Activated T-helper 2 cell treated with anti-CD3 and anti-CD28 coated beads, Interferon-gamma antibody, Interleukin-2, Interleukin-4, amounts not matched to agents 10 μg/mL and 5 μg/mL and 100 μg/mL, durations not matched to agents 14 hours and 24 hours and 36 hours (primary cell): ENCODE measurements at regions of chr9 and their contacts with region 1.

Region 1: DNA sequence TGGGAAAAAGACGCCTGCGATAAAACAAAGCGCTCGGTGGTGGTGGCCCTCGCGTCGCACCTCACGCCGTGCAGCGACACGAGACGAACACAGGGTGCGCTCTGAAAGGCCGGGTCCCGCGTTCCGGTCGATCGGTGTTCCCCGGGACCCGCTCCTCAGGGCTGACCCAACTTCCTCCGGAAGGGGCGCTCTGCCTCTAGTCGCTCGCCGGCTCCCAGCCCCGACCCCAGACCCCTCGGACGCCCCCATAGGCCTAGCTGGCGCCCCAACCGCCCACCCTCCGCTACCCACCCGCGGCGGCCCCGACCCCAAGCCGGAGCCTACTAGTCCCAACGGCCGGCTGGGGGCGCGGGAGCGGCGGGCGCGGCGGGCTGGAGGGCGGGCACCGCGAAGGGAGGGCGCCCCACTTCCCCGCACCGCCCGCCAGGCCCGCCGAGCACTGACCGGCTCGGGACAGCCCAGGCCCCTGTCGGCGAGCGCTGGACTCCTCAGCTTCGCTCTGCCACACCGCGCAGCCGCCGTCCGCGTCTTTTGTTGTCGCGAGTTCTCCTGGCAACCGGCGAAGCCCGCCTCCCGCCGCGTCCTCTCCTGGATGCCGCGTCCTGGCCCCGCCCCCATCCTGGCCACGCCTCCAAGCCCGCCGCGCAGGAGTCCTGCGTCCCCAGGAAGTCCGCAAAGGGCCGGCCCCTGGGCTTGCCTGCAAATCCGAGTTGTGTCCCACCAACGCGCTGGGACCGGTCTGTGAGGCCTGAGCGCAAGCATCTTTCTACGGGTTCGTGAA is at the start of gene KIF27:
- DNase-seq: peak; percentile 97
- H3K4me3 Mint-ChIP-seq: peak within 1 kb of the TSS; percentile 78
- H3K27ac Mint-ChIP-seq: peak within 1 kb of the TSS; percentile 90
- H3K4me1 Mint-ChIP-seq: peaks cover 19% of the 10 kb centered on the region
- H3K27me3 Mint-ChIP-seq: no peaks in the 10 kb centered on the region
- total RNA-seq, gene KIF27: 2.3 and 2.7 TPM in 2 replicates

Region 2: DNA sequence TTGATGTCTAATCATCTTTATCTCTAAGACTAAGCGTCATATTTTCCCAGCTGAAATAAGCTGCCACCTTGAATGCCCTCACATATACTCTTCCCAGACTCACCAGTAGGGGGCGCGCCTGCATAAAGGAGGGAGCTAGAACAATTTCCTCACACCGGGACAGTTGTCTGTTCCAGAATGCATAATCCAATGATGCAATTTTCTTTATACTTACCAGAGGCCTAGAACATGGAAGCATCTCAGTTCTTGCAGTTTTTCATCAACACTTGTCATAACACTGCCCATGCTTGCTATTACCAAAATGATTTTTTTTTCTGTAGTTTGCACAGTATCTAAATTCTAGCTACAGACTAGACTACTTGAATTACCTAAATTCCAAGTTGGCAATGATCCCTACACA is 586.8 kb before region 1 on chr9:
- intact Hi-C with region 1: loop called (anchors 10 kb)
- DNase-seq: peak; percentile 55
- H3K4me3 Mint-ChIP-seq: no peak overlapping the region
- H3K27ac Mint-ChIP-seq: no peak overlapping the region
- H3K4me1 Mint-ChIP-seq: peaks cover 11% of the 10 kb centered on the region
- H3K27me3 Mint-ChIP-seq: no peaks in the 10 kb centered on the region

Region 3: GRCh38 chr9:83707768-83708514 is 213.2 kb before region 1 on chr9 and contains the start of gene UBQLN1:
- intact Hi-C with region 1: loop called (anchors 1 kb)
- DNase-seq: peak; percentile 90
- H3K4me3 Mint-ChIP-seq: peak within 1 kb of the TSS; percentile 88
- H3K27ac Mint-ChIP-seq: peak within 1 kb of the TSS; percentile 96
- H3K4me1 Mint-ChIP-seq: peaks cover 27% of the 10 kb centered on the region
- H3K27me3 Mint-ChIP-seq: no peaks in the 10 kb centered on the region
- total RNA-seq, gene UBQLN1: 138 and 140 TPM in 2 replicates

Region 4: DNA sequence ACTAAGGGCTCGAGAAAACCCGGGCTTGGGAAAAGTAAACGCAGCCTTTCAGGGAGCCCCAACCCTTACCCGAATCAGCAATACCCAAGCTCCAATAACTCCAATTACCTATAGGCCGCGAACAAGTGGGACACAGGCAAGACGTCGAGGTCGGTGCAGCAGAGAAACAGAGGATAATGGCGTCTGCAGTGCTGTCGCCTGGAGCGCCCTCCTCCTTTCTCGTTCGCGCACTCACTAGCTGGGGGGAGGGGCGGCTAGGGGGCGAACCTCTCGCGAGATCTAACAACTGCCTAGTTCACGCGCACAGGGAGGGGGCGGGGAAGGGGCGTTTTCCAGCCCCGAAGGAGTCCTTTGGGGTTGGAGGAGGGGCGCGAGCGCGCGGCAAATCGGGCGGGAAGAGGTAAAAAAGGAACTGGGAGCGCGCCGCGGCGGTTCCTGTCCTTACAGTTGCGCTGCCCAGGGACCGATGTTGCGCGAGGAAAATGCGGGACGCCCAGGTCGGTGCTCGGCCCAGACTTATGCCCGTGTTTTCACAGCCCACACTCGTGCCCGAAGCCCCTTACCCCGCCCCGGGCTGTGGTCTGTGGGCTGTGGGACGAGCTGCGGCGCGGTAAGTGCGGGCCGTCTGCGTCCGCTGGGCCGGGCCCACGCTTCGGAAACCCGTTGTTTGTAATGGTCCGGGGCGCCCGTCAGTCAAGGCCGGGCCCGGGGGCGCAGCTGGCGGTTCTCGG is 59.4 kb after region 1 on chr9 and contains the start of gene RMI1:
- intact Hi-C with region 1: loop called (anchors 1 kb)
- DNase-seq: peak; percentile 96
- H3K4me3 Mint-ChIP-seq: peak within 1 kb of the TSS; percentile 100
- H3K27ac Mint-ChIP-seq: peak within 1 kb of the TSS; percentile 99
- H3K4me1 Mint-ChIP-seq: peaks cover 43% of the 10 kb centered on the region
- H3K27me3 Mint-ChIP-seq: no peaks in the 10 kb centered on the region
- total RNA-seq, gene RMI1: 26.1 and 27.3 TPM in 2 replicates

Region 5: DNA sequence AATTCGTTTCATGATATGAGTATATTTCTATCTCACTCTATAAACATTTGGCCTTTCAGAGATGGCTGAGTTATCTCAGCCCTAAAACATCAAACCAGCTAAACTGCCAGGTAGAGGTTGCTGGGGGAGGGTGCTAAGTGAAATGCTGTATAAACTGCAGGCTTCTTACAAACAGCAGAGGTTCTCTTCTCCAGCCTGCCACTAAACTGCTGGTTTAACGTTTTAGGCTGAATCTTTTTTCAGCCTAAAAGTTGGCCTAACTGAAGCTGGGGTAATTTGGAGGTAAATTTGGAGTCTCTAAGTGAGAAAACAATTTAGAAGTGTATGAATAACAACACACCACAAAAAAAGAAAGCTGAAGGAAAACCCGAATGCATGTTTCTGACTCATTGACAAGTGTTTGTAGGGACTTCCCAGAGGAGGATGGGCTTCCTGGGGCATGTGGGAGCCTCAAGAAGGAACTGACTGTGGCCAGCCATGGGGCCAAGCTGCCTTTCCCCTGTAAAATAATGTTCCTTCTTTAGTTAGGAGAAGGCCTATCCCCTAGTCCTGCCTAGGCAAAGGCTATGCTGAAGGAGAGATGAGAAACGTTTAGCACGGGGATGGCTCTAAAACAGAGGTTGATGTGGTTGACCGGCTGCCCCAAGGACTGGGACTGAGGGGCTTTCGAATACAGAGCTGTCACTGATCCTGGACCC is 375.2 kb after region 1 on chr9:
- intact Hi-C with region 1: loop called (anchors 10 kb)
- DNase-seq: peak; percentile 23
- H3K4me3 Mint-ChIP-seq: peak overlapping the region; percentile 44
- H3K27ac Mint-ChIP-seq: peak overlapping the region; percentile 98
- H3K4me1 Mint-ChIP-seq: peaks cover 48% of the 10 kb centered on the region
- H3K27me3 Mint-ChIP-seq: no peaks in the 10 kb centered on the region